Activated naive CD4-positive, alpha-beta T cell treated with anti-CD3 and anti-CD28 coated beads, Interleukin-2, amount 10 ng/mL, durations not matched to agents 7 days and 5 days (primary cell): ENCODE measurements at regions of chr22 and their contacts with region 1.

Region 1: DNA sequence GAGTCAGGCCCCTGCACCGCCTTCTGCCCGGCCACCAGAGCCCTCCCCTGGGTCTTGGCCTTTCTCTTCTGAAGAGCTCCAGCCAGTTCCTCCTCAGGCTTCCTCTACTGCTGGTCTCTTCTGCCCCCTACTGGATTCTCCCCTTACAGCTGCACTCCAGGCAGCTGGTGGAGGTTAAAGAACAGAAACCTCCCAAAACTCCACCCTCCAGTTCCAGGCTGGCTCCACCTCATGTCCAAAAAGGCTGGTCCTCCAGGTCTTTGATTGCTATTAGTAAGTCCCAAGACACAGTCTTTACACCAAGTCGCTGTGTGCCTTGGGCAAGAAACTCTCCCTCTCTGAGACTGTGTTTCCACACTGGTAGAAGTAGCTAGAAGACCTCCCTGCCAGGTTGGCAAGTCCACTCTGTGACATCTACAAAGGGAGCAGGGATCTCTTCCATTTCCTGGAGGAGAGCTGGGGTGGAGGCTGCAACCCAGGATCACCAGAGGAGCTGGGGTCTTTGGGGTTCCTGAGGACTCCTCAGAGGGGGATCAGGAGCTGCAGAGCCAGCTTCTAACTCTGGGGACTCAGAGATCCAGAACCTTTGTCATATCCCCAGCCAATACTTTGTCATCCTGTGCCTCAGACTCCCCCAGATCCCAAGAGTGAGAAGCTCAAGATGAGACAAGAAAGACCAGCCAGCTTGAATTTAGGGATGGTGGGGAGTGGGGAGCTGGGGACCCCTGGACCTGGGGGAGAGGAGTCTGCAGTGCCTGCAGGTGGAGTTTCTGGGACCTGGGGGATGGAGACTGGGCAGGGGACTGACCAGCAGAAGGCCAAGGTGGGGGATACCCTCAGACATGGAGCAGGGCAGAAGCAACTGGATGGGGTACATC is 3.4 kb upstream of the IGLL5 start:
- DNase-seq: peak; percentile 85
- H3K4me3 Mint-ChIP-seq: no peak overlapping the region
- H3K27ac Mint-ChIP-seq: no peak overlapping the region
- H3K4me1 Mint-ChIP-seq: peaks cover 18% of the 10 kb centered on the region
- H3K27me3 Mint-ChIP-seq: peaks cover 91% of the 10 kb centered on the region

Region 2: GRCh38 chr22:22745225-22746060 is 138.8 kb before region 1 on chr22:
- CTCF ChIA-PET with region 1: interaction called, 20 read pairs
- DNase-seq: peak; percentile 57
- H3K4me3 Mint-ChIP-seq: no peak overlapping the region
- H3K27ac Mint-ChIP-seq: no peak overlapping the region
- H3K4me1 Mint-ChIP-seq: no peaks in the 10 kb centered on the region
- H3K27me3 Mint-ChIP-seq: peaks cover 39% of the 10 kb centered on the region

Region 3: DNA sequence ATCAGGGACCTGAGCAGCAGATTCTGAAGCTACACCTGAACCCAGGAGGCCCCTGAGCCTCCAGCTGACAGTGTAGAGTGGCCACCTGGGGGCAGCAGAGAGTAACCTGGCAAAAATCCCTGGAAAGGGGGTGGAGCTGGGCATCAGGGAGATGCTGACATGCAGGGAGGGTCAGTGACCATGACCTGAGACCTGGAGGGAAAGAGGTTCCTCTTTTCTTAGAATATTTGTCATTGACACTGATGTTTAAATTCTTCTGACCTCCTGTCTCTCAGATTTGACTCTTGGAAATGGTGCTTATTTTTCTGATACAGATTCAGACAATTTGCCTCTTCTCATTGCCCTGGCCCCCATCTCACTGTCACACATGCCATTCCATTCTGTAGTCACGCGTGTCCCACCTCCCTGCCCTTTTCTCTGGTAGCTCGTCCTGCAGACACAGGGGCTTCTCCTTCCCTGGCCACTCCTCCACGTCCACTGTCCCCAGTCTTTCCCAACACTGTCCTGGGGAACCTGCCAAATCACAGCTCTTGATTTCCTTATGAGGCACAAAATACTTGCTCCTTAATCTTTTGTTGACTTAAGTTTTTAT is 113.9 kb before region 1 on chr22:
- CTCF ChIA-PET with region 1: interaction called, 31 read pairs
- DNase-seq: peak; percentile 64
- H3K4me3 Mint-ChIP-seq: no peak overlapping the region
- H3K27ac Mint-ChIP-seq: no peak overlapping the region
- H3K4me1 Mint-ChIP-seq: no peaks in the 10 kb centered on the region
- H3K27me3 Mint-ChIP-seq: peaks cover 61% of the 10 kb centered on the region

Region 4: DNA sequence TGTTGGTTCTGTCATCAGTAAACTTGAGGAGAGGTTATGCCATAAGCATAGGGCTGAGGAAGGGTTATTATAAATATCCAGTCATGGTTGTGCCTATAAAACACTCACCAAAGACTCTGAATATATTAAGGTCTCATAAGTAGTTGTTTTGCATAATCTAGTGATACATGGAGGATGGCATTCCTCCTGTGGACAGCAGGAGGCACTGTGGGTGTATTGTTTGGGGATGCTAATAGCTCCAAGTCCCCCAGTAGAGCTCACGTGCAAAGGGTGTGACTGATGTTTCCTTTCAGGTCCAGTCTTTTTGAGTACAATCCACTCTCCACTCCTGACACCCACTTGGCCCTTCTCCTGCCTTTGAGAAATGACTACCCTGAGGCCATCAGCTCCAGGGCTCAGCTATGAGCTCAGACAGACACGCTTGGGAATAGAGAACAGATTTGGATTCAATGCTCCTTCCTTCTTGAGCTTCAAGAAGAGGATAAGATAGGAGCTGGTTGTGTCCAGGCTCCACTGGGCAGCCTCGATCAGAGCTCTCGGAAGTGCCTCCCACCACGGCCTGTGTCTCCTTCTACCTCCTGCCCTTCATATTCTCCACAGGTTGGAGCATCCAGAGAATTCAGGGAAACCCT is 81.8 kb before region 1 on chr22:
- CTCF ChIA-PET with region 1: interaction called, 191 read pairs
- DNase-seq: peak; percentile 67
- H3K4me3 Mint-ChIP-seq: no peak overlapping the region
- H3K27ac Mint-ChIP-seq: no peak overlapping the region
- H3K4me1 Mint-ChIP-seq: no peaks in the 10 kb centered on the region
- H3K27me3 Mint-ChIP-seq: peaks cover 63% of the 10 kb centered on the region

Region 5: GRCh38 chr22:22848364-22848866 is 35.8 kb before region 1 on chr22:
- CTCF ChIA-PET with region 1: interaction called, 187 read pairs
- DNase-seq: peak; percentile 83
- H3K4me3 Mint-ChIP-seq: no peak overlapping the region
- H3K27ac Mint-ChIP-seq: no peak overlapping the region
- H3K4me1 Mint-ChIP-seq: peaks cover 14% of the 10 kb centered on the region
- H3K27me3 Mint-ChIP-seq: peaks cover 54% of the 10 kb centered on the region

Region 6: DNA sequence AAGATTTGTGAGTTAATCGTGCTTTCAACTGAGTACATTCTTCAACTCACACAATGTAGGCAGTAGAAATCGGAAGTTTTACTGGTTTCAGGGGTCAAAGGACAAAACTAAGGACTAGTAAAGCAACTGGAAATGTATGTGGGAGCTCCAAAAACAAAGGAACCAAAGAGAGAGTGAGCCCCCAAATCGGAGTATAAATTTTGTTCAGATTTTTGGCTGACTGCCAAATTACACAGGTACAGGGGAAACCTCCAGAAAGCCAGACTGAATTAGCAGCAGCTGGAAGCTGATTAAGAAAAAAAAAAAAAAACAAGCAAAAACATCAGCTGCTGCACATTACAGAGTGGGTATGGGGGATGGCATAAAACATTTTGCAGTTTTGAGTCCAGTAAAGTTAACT is 110.9 kb after region 1 on chr22:
- CTCF ChIA-PET with region 1: no interaction called
- DNase-seq: no peak
- H3K4me3 Mint-ChIP-seq: no peak overlapping the region
- H3K27ac Mint-ChIP-seq: no peak overlapping the region
- H3K4me1 Mint-ChIP-seq: no peaks in the 10 kb centered on the region
- H3K27me3 Mint-ChIP-seq: peaks cover 41% of the 10 kb centered on the region